Head of caudate nucleus (tissue), 42 donors: ENCODE measurements at regions of chr20 and their contacts with region 1.

Region 1: DNA sequence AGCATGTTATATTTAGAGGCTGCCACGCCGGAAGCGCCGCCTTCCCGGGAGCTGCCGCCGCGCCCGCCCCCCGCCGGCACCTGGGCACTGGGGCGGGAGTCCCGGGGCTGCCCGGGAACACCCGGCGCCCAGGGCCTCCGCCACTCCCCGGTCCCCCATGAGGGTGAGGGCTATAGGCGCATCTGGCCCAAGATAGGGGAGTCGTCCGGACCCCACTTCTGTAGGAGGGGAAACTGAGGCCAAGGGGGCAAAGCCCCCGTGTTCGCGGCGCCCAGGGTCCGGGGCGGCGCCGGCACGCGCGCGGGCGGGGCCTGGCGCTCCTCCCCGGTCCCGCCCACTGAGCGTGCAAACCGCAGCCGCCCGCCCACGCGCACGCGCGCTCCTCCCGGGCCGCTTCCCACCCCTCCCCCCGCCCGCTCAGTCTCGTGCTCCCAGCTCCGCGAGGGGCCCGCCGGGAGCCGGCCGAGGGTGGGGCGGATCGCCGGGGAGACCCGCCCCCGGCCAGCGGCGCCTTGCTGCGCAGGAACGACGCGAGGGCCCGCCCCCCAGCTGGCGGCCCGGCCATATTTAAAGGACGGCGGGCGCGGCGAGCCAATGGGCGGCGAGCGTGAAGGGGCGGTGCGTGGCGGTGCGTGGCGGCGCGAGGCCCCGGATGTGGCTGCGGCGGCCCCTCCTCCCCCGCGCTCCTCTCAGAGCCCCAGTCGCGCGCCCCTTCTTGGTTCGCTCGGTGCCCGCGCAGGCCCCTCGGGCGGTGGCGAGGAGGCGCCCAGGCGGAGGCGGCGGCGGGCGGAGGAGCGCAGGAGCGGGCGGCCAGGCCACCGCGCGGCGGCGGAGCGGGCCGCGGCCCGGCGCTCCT is at the start of gene LSM14B:
- DNase-seq: peak; percentile 75 to 98 (median 95)

Region 2: DNA sequence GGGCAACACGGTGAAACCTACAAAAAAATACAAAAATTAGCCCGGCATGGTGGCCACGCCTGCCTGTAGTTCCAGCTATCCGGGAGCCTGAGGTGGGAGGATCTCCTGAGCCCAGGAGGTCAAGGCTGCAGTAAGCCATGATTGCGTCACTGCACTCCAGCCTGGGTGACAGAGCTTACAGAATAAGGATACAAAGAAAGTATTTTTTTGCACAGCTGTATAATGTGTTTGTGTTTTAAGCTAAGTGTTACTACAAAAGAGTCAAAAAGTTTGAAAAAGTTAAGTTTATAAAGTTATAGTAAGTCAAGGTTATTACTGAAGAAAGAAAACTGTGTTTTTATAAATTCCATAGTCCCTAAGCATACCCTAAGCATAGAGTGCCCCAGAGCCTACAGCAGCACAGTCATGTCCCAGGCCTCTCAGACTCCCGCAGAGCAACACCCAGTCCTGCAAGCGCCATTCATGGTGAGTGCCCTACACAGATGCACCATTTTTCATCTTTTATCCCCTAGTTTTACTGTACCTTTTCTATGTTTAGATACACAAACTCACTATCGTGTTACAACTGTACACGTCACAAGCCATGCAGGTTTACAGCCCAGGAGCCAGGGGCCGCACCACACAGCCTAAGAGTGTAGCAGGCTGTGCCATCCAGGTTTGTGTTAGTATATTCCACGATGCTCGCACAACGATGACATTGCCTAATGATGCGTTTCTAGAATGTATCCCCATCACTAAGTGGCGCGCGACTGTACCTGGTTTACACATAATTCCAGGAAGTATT is 78.7 kb before region 1 on chr20:
- intact Hi-C with region 1: no loop called
- DNase-seq: no peak

Region 3: DNA sequence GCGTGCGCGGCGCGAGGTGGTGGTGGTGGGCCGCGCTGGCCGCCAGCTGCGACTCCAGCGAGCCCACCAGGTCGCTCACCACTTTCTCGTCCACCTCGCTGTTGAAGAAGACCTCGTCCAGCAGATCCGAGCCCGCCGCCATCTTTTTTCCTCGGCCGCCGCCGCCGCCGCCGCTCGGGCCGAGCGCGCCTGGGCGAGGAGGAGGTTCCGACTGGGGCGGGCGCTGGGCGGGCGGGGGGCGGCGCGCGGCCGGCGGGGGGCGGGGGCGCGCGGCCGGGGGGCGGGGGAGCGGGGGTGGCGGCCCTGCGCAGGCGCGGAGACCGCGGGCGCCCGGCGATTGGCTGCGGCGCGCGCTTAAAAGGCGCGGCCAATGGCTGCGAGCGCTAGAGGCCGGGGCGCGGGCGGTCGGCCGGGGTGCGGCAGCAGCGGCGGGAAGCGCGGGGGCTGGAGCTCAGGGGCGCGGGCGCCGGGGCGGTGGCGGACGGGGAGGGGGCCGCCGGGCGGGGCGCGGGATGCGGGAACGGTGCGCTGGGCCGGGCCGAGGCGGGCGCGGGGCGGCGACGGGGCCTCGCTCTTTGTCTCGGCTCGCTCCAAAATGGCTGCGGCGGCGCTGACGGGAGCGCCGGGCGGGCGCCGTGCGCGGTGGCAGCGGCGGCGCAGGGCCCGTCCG is 56.2 kb before region 1 on chr20 and contains the start of gene TAF4:
- intact Hi-C with region 1: loop called (anchors 2 kb)
- DNase-seq: peak in 41 of 42 donors; percentile 44 to 90 (median 79)